Keratinocyte (primary cell): ENCODE measurements at regions of chr7 and their contacts with region 1.

Region 1: GRCh38 chr7:143214789-143215679 is 6.8 kb upstream of the TAS2R40 start:
- DNase-seq: peak; percentile 38
- H3K4me3 ChIP-seq: no peak overlapping the region
- H3K27ac ChIP-seq: no peak overlapping the region
- H3K4me1 ChIP-seq: no peaks in the 10 kb centered on the region
- H3K27me3 ChIP-seq: no peaks in the 10 kb centered on the region
- CTCF ChIP-seq: peak; percentile 75 to 99 (median 95)

Region 2: GRCh38 chr7:142811154-142811737 is 403.8 kb before region 1 on chr7:
- dilution Hi-C with region 1: loop called (anchors 25 kb)
- DNase-seq: no peak
- H3K4me3 ChIP-seq: no peak overlapping the region
- H3K27ac ChIP-seq: no peak overlapping the region
- H3K4me1 ChIP-seq: no peaks in the 10 kb centered on the region
- H3K27me3 ChIP-seq: peaks cover 3% of the 10 kb centered on the region
- CTCF ChIP-seq: peak; percentile 34 to 59 (median 44)

Region 3: DNA sequence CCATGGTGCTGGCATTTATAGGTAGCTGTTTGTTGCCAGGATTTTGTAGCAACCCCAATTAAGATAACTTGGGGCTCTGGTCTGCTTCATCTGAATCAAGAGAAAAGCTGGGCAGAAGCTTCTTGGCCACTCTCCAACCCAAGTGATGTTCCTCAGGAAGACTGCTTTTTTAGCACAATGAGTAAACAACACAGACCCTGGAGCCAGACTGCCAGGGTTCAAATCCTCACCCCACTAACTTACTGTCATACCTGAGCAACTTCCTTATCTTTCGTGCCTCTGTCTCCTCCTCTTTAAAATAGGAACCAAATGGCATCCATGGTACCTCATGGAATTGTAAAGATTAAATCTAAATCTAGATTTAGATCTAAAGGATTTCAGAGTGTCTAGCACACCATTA is 263.8 kb before region 1 on chr7:
- dilution Hi-C with region 1: no loop called
- DNase-seq: no peak
- H3K4me3 ChIP-seq: no peak overlapping the region
- H3K27ac ChIP-seq: no peak overlapping the region
- H3K4me1 ChIP-seq: no peaks in the 10 kb centered on the region
- H3K27me3 ChIP-seq: no peaks in the 10 kb centered on the region
- CTCF ChIP-seq: no peak

Region 4: DNA sequence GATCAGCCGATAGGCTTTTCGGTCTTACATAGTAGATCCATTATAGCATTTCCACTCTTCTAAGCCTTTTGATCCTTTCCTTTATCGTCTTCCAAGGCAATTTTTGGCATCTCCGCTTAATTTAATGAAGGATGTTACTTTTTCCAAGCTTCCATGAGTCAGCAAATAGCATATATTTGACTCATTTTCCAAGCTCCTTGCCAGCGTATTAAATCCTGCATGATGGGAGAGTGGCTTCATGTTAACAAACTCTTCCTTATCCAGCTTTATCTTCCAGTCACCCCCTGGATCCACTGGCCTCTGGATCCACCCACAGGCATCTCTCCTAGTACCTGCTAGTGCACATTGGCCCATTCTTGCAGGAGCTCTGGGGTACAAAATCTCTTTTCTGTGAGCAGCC is 201.1 kb before region 1 on chr7:
- dilution Hi-C with region 1: loop called (anchors 10 kb)
- DNase-seq: no peak
- H3K4me3 ChIP-seq: no peak overlapping the region
- H3K27ac ChIP-seq: no peak overlapping the region
- H3K4me1 ChIP-seq: peaks cover 7% of the 10 kb centered on the region
- H3K27me3 ChIP-seq: no peaks in the 10 kb centered on the region
- CTCF ChIP-seq: no peak